BJ (cell line): ENCODE measurements at regions of chr14 and their contacts with region 1.

Region 1: GRCh38 chr14:96275177-96276112 is 19.4 kb downstream of the BDKRB1 start:
- DNase-seq: no peak
- H3K4me3 ChIP-seq: no peak overlapping the region
- H3K27me3 ChIP-seq: no peaks in the 10 kb centered on the region
- CTCF ChIP-seq: peak; percentile 99

Region 2: GRCh38 chr14:95993768-95994592 is 281.5 kb before region 1 on chr14:
- CTCF ChIA-PET with region 1: interaction called, 23 read pairs
- POLR2A ChIA-PET with region 1: no interaction called
- DNase-seq: no peak
- H3K4me3 ChIP-seq: no peak overlapping the region
- H3K27me3 ChIP-seq: no peaks in the 10 kb centered on the region
- CTCF ChIP-seq: peak; percentile 78

Region 3: DNA sequence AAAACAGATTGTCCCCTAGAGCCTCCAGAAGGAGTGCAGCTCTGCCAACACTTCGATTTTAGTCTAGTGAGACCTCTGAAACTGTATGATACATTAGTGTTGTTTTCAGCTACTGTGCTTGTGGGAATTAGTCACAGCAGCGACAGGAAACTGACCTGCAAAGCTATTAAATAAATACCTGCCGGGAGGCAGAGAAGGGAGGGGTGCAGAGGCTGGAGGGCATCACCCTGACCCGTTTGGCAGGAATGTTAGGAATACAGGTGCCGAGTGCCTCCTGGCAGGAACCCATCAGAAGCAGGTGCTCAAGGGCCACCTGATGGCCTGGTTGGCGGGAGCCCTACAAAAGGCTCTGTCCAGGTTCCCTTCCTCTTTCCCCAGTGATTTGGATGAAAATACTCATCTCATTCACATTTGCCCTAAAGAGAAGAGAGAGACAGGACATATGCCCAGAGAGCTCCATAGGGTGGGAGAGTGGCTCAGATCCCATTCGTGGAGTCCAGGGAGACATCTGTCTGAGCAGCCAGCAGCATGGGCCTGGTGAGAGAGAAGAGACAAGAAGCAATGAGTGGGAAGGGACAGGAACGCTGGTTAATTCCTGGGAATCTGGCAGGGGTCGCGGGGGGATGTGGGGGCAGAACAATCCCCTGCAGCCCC is 191.7 kb before region 1 on chr14:
- CTCF ChIA-PET with region 1: no interaction called
- POLR2A ChIA-PET with region 1: no interaction called
- DNase-seq: no peak
- H3K4me3 ChIP-seq: no peak overlapping the region
- H3K27me3 ChIP-seq: no peaks in the 10 kb centered on the region
- CTCF ChIP-seq: no peak

Region 4: GRCh38 chr14:96100161-96101029 is 175.1 kb before region 1 on chr14:
- CTCF ChIA-PET with region 1: interaction called, 225 read pairs
- POLR2A ChIA-PET with region 1: no interaction called
- DNase-seq: no peak
- H3K4me3 ChIP-seq: no peak overlapping the region
- H3K27me3 ChIP-seq: no peaks in the 10 kb centered on the region
- CTCF ChIP-seq: peak; percentile 95

Region 5: DNA sequence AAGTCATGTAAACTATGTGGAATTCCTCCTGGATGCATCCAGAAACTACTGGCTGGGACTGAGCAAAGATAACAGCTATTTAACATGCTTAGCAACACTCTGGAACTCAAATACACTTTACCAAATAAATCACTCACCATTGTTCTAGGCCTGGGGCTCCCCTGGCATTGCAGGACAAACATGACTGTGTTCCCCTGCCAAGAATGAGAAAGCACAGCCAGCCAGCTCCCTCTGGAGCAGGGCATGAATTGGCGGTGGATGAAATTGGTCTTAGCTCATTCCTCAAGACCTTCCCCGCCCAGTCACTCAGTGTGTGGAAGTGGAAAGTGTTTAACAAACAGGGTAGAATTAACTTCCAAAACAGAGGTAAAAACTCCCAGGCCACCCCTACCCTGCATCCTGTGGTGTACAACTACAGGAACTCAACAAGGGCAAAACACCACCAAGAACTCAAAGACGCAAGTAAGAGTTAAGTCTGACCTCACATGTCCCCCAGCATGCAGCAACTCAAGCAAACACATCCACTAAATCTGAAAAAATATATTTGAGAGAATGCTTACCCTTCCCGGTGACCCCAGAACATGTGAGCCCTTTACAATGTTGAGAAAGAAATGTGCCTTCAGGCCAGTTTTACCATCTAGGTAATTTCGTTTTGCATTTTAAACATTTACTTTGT is 129.2 kb before region 1 on chr14:
- CTCF ChIA-PET with region 1: interaction called, 12 read pairs
- POLR2A ChIA-PET with region 1: no interaction called
- DNase-seq: peak; percentile 70
- H3K4me3 ChIP-seq: no peak overlapping the region
- H3K27me3 ChIP-seq: no peaks in the 10 kb centered on the region
- CTCF ChIP-seq: no peak

Region 6: DNA sequence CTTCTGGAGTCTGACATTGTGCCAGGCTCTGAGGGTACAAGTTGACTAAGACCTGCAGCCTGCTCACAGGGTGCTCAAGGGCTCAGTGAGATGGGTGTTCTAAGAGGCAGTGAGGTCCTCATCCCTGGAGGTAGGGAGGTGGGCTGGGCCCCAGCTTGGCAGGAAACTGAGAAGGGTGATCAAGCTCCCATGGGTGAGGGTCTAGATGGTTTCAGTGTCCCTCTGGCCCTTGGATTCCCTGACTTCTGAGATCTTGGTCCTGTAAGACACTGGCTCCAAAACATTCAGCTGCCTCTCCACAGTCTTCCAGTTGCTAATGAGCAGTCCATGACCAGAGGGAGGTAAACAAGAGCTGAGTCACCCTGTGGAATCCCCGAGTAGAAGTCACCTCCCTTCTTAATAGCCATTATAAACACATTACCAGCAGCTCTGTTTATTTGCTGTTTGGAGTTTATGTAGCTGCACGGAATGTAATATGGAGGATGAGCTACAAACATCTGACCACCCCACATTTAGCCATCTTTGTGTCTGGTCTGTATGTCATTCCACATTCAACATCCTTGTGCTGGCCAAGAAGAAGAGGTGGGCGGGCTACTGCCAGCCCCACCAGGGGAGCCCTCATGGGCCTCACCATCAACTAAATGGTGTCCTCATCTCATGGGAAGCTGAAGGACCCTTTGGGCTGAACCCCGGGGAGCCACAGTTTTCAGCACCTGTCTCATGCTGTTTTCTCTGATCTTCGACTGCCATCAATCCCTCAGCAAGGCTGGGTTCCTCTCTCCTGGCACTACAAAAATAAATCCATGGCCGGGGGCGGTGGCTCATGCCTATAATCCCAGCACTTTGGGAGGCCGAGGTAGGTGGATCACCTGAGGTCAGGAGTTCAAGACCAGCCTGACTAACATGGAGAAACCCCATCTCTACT is 108.0 kb before region 1 on chr14:
- CTCF ChIA-PET with region 1: no interaction called
- POLR2A ChIA-PET with region 1: no interaction called
- DNase-seq: peak; percentile 88
- H3K4me3 ChIP-seq: no peak overlapping the region
- H3K27me3 ChIP-seq: no peaks in the 10 kb centered on the region; the same call in 1 of the 2 replicates
- CTCF ChIP-seq: no peak

Region 7: DNA sequence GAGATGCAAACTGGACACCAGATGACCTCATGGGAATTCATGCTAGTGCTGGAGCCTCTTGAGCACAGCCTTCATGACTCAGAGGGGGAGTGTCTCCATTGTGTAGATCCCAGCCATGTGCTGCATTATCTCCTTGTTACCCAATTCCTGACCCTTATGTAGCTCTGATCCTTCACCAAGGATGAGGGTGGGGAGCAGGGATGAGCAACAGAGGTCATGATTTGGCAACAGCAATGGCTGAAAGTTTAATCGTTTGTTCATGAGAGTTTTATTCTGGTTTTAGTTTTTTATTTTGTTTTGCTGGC is 29.0 kb before region 1 on chr14:
- CTCF ChIA-PET with region 1: interaction called, 19 read pairs
- POLR2A ChIA-PET with region 1: no interaction called
- DNase-seq: peak; percentile 70
- H3K4me3 ChIP-seq: no peak overlapping the region
- H3K27me3 ChIP-seq: no peaks in the 10 kb centered on the region
- CTCF ChIP-seq: 0 out of 2 replicates have a peak, but pooled peaks have one; percentile 6

Region 8: DNA sequence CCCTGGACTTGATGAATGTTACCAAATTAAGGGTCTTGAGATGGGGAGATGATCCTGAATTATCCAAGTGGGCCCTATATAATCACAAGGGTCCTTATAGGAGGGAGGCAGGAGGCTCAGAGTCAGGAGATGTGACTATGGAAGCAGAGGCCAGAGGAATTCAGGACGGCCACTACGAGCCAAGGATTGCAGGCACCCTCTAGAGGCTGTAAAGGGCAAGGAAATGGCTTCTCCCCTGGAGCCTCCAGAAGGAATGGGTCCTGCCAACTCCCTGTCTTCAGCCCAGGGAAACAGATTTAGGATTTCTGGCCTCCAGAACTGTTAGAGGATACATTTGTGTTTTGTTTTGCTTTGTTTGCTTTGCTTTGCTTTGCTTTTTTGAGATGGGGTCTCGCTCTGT is 10.6 kb before region 1 on chr14:
- CTCF ChIA-PET with region 1: interaction called, 25 read pairs
- POLR2A ChIA-PET with region 1: no interaction called
- DNase-seq: no peak
- H3K4me3 ChIP-seq: no peak overlapping the region
- H3K27me3 ChIP-seq: no peaks in the 10 kb centered on the region
- CTCF ChIP-seq: peak; percentile 61

Region 9: DNA sequence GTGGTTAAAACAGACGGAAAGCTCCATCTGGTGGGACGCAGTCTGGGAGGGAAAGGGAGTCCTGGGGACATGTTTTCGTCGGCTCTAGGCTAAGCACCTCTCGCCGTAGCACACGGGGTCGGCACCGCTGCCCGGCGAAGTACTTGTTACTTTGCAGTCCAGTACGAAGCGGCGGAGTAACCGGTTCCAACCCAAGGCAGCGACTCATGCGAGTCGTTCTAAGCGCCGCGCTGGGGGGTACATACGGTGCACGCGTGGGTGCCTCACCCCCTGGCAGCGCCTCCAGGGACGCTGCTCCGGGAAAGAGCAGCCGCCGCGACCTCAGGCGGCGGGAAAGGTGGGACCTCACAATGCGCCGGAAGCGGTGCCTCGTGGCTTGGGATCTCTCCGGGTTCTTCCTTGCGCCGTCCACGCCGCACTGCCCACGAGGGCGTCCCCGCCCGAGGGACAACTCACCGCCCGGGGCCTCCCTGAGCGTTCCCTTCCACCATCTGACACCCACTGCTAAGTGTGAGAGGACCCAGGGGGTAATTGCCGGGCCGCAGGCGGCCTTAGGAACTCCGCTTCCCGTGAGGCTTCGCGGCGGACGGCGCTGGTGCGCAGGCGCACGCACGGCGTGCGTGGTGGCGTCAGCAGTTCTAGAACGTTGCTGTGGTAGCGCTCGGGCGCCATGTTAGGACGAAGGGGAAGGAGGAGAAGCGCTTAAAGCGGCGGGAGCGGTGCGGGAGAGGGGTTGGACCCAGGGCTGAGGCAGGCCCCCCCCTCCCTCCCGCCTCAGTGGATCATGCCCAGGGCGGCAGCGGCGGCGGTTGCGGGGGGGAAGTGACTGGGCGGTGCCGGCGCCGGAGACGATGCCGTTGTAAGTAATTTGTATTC is 226.5 kb after region 1 on chr14 and contains the start of gene PAPOLA:
- CTCF ChIA-PET with region 1: no interaction called
- POLR2A ChIA-PET with region 1: interaction called, 10 read pairs
- DNase-seq: peak; percentile 80
- H3K4me3 ChIP-seq: peak within 1 kb of the TSS; percentile 95
- H3K27me3 ChIP-seq: no peaks in the 10 kb centered on the region
- CTCF ChIP-seq: peak; percentile 33
- polyA plus RNA-seq, gene PAPOLA: 92.4 and 117 TPM in 2 replicates